IMR-90 (cell line): ENCODE measurements at regions of chr21 and their contacts with region 1.

Region 1: GRCh38 chr21:28745131-28746016 is 247.3 kb downstream of the LTN1 start:
- DNase-seq: peak; percentile 94
- ATAC-seq: peak; percentile 82
- H3K4me3 ChIP-seq: peak overlapping the region; percentile 38; the same call in 1 of the 2 replicates
- H3K27ac ChIP-seq: peak overlapping the region; percentile 93
- H3K4me1 ChIP-seq: peaks cover 6% of the 10 kb centered on the region
- H3K27me3 ChIP-seq: no peaks in the 10 kb centered on the region
- CTCF ChIP-seq: peak; percentile 99
- POLR2A ChIP-seq: peak; percentile 60
- RAD21 ChIP-seq: peak; percentile 100

Region 2: GRCh38 chr21:26967062-26967913 is 1778.1 kb before region 1 on chr21 and contains the start of gene ADAMTS5:
- CTCF ChIA-PET with region 1: no interaction called
- POLR2A ChIA-PET with region 1: no interaction called
- dilution Hi-C with region 1: no loop called
- in situ Hi-C with region 1: no loop called
- intact Hi-C with region 1: loop called (anchors 10 kb)
- DNase-seq: peak; percentile 69
- ATAC-seq: peak; percentile 61
- H3K4me3 ChIP-seq: peak within 1 kb of the TSS; percentile 65
- H3K27ac ChIP-seq: peak within 1 kb of the TSS; percentile 80
- H3K4me1 ChIP-seq: no peaks in the 10 kb centered on the region; the same call in 1 of the 2 replicates
- H3K27me3 ChIP-seq: no peaks in the 10 kb centered on the region
- CTCF ChIP-seq: 0 out of 2 replicates have a peak, but pooled peaks have one; percentile 4
- POLR2A ChIP-seq: peak; percentile 65
- RAD21 ChIP-seq: no peak; the same call in 1 of the 2 replicates
- total RNA-seq, gene ADAMTS5: 0.54 and 1.1 TPM in 2 replicates

Region 3: GRCh38 chr21:27564684-27565301 is 1180.6 kb before region 1 on chr21:
- CTCF ChIA-PET with region 1: no interaction called
- POLR2A ChIA-PET with region 1: no interaction called
- dilution Hi-C with region 1: no loop called
- in situ Hi-C with region 1: loop called (anchors 25 kb)
- intact Hi-C with region 1: no loop called
- DNase-seq: peak; percentile 70
- ATAC-seq: peak; percentile 74
- H3K4me3 ChIP-seq: no peak overlapping the region
- H3K27ac ChIP-seq: peak overlapping the region; percentile 33; the same call in 1 of the 2 replicates
- H3K4me1 ChIP-seq: peaks cover 10% of the 10 kb centered on the region
- H3K27me3 ChIP-seq: no peaks in the 10 kb centered on the region
- CTCF ChIP-seq: peak; percentile 70
- POLR2A ChIP-seq: no peak
- RAD21 ChIP-seq: peak; percentile 79

Region 4: DNA sequence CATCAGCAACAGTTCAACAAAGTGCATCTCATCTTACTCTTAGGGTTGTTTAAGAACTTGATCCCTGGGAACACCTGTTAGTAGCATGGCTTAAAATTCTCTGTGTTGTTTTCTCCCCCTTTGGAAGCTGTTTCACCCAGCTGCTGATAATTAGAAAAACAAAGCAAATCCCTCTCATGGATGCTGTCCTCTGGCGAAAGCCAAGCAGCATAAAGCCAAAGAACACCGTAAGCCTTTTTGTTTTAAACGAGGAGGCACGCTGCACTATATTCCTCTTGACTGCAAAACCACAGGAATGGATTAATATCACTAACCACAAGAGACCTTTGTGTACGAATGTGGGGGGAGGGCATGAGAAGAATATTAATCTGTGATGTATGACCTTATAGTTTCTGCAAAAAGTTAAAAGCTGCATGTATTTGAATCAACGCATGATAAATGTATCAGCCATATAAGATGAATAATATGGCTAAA is 675.9 kb before region 1 on chr21:
- CTCF ChIA-PET with region 1: no interaction called
- POLR2A ChIA-PET with region 1: no interaction called
- dilution Hi-C with region 1: no loop called
- in situ Hi-C with region 1: loop called (anchors 25 kb)
- intact Hi-C with region 1: no loop called
- DNase-seq: peak; percentile 83
- ATAC-seq: peak; percentile 88
- H3K4me3 ChIP-seq: no peak overlapping the region
- H3K27ac ChIP-seq: peak overlapping the region; percentile 46; the same call in 1 of the 2 replicates
- H3K4me1 ChIP-seq: peaks cover 8% of the 10 kb centered on the region
- H3K27me3 ChIP-seq: no peaks in the 10 kb centered on the region
- CTCF ChIP-seq: no peak
- POLR2A ChIP-seq: no peak
- RAD21 ChIP-seq: no peak

Region 5: GRCh38 chr21:28442624-28443023 is 302.8 kb before region 1 on chr21:
- CTCF ChIA-PET with region 1: no interaction called
- POLR2A ChIA-PET with region 1: no interaction called
- dilution Hi-C with region 1: no loop called
- in situ Hi-C with region 1: no loop called
- intact Hi-C with region 1: loop called (anchors 5 kb)
- DNase-seq: peak; percentile 86
- ATAC-seq: peak; percentile 49; the same call in 1 of the 2 replicates
- H3K4me3 ChIP-seq: no peak overlapping the region
- H3K27ac ChIP-seq: no peak overlapping the region
- H3K4me1 ChIP-seq: peaks cover 12% of the 10 kb centered on the region; the same call in 1 of the 2 replicates
- H3K27me3 ChIP-seq: no peaks in the 10 kb centered on the region
- CTCF ChIP-seq: no peak
- POLR2A ChIP-seq: no peak
- RAD21 ChIP-seq: no peak

Region 6: GRCh38 chr21:28455253-28455600 is 290.1 kb before region 1 on chr21:
- CTCF ChIA-PET with region 1: no interaction called
- POLR2A ChIA-PET with region 1: no interaction called
- dilution Hi-C with region 1: no loop called
- in situ Hi-C with region 1: no loop called
- intact Hi-C with region 1: no loop called
- DNase-seq: peak; percentile 44
- ATAC-seq: peak; percentile 83
- H3K4me3 ChIP-seq: no peak overlapping the region; the same call in 1 of the 2 replicates
- H3K27ac ChIP-seq: no peak overlapping the region
- H3K4me1 ChIP-seq: no peaks in the 10 kb centered on the region; the same call in 1 of the 2 replicates
- H3K27me3 ChIP-seq: no peaks in the 10 kb centered on the region
- CTCF ChIP-seq: no peak
- POLR2A ChIP-seq: no peak
- RAD21 ChIP-seq: no peak

Region 7: DNA sequence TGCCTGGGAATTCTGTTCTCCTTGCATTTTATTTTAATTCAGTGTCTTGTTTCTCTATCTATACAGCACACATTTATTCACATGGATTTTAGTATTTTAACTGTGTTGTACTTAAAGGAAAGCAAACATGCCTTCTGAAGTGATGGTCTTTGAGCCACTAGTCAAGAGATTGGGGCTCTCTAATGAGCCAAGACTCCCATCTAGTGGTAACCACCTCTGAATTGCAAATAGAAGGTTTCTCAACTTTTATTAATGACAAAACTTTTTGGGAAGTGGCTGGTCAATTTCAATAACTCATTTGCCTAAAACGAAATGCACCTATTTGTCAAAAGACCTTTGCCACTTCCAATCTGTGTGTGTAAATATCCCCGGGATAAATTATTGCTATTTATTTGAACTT is 47.7 kb after region 1 on chr21:
- CTCF ChIA-PET with region 1: interaction called, 4 read pairs
- POLR2A ChIA-PET with region 1: no interaction called
- dilution Hi-C with region 1: no loop called
- in situ Hi-C with region 1: no loop called
- intact Hi-C with region 1: loop called (anchors 1 kb)
- DNase-seq: peak; percentile 73
- ATAC-seq: peak; percentile 85
- H3K4me3 ChIP-seq: no peak overlapping the region
- H3K27ac ChIP-seq: no peak overlapping the region
- H3K4me1 ChIP-seq: peaks cover 9% of the 10 kb centered on the region
- H3K27me3 ChIP-seq: no peaks in the 10 kb centered on the region
- CTCF ChIP-seq: peak; percentile 75
- POLR2A ChIP-seq: no peak
- RAD21 ChIP-seq: peak; percentile 85